ENCODE measurements at regions of chr17 and their contacts with region 1.

Region 1: GRCh38 chr17:30831663-30832437 is at the start of gene ATAD5:
- DNase-seq: peak; percentile 73 to 90 (median 87)
- ATAC-seq: peak; percentile 99
- H3K4me3 ChIP-seq: peak within 1 kb of the TSS; percentile 81
- H3K4me3 Mint-ChIP-seq: peak within 1 kb of the TSS; percentile 92 to 100 (median 96)
- H3K27ac ChIP-seq: peak within 1 kb of the TSS; percentile 75
- H3K27ac Mint-ChIP-seq: peak within 1 kb of the TSS; percentile 83 to 98 (median 92)
- H3K4me1 ChIP-seq: peaks cover 12 to 17% of the 10 kb centered on the region in 2 donors
- H3K4me1 Mint-ChIP-seq: peaks cover 14 to 40% (median 26%) of the 10 kb centered on the region in 7 donors
- H3K27me3 ChIP-seq: no peaks in the 10 kb centered on the region
- H3K27me3 Mint-ChIP-seq: no peaks in the 10 kb centered on the region
- total RNA-seq, gene ATAD5: 3.5 to 22.1 (median 5.0) TPM

Region 2: GRCh38 chr17:30600049-30600829 is 231.6 kb before region 1 on chr17:
- CTCF ChIA-PET with region 1: no interaction called
- POLR2A ChIA-PET with region 1: no interaction called
- intact Hi-C with region 1: loop called in 1 of 2 experiments (anchors 2 kb)
- DNase-seq: peak; percentile 20 to 76 (median 47)
- ATAC-seq: peak; percentile 91
- H3K4me3 ChIP-seq: peak overlapping the region; percentile 79
- H3K4me3 Mint-ChIP-seq: peak overlapping the region; percentile 81 to 97 (median 92)
- H3K27ac ChIP-seq: peak overlapping the region; percentile 61
- H3K27ac Mint-ChIP-seq: peak overlapping the region in 8 of 9 donors; percentile 14 to 91 (median 75)
- H3K4me1 ChIP-seq: peaks cover 0 to 2% of the 10 kb centered on the region in 2 donors
- H3K4me1 Mint-ChIP-seq: peaks cover 5 to 25% (median 22%) of the 10 kb centered on the region in 7 donors
- H3K27me3 ChIP-seq: no peaks in the 10 kb centered on the region
- H3K27me3 Mint-ChIP-seq: peaks cover 0 to 18% (median 0%) of the 10 kb centered on the region in 5 donors

Measured in naive thymus-derived CD4-positive, alpha-beta T cell (primary cell).